Heart left ventricle (tissue), 16 donors: ENCODE measurements at regions of chr13 and their contacts with region 1.

Region 1: GRCh38 chr13:29707876-29708543 is 112.5 kb upstream of the SLC7A1 start:
- DNase-seq: peak in 3 of 5 donors; percentile 19 to 62 (median 33)
- ATAC-seq: peak; percentile 67 to 73 (median 71)
- H3K4me3 ChIP-seq: no peak overlapping the region
- H3K27ac ChIP-seq: no peak overlapping the region
- H3K4me1 ChIP-seq: peaks cover 0 to 15% (median 9%) of the 10 kb centered on the region in 12 donors
- H3K27me3 ChIP-seq: peaks cover 0 to 3% (median 0%) of the 10 kb centered on the region in 9 donors
- CTCF ChIP-seq: peak; percentile 21 to 64 (median 50)
- POLR2A ChIP-seq: no peak

Region 2: GRCh38 chr13:29619995-29620394 is 88.0 kb before region 1 on chr13:
- intact Hi-C with region 1: loop called in 1 of 10 experiments (anchors 10 kb)
- DNase-seq: no peak
- ATAC-seq: no peak
- H3K4me3 ChIP-seq: no peak overlapping the region
- H3K27ac ChIP-seq: no peak overlapping the region
- H3K4me1 ChIP-seq: no peaks in the 10 kb centered on the region
- H3K27me3 ChIP-seq: no peaks in the 10 kb centered on the region
- CTCF ChIP-seq: no peak
- POLR2A ChIP-seq: no peak

Region 3: DNA sequence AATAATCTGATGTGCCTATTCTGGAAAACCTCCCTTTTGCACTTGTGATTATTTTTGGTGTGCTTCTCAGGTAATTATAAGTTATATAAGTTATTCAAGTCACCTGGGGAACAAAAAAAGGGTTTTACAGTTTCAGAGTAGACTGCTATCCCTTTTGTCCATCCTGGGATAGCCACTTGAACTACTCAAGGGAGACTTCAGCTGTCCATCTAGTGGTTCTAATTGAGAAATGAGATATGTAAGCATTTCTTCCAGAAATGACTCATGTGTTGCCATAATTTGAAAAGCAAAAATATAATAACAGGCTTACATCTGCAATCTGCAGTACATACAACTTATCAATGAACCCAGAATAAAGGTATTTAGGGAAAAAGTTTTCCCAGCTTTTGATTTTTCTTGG is 122.0 kb after region 1 on chr13:
- intact Hi-C with region 1: no loop called
- DNase-seq: no peak
- ATAC-seq: no peak
- H3K4me3 ChIP-seq: no peak overlapping the region
- H3K27ac ChIP-seq: no peak overlapping the region
- H3K4me1 ChIP-seq: peaks cover 0 to 21% (median 9%) of the 10 kb centered on the region in 12 donors
- H3K27me3 ChIP-seq: no peaks in the 10 kb centered on the region
- CTCF ChIP-seq: no peak
- POLR2A ChIP-seq: no peak

Region 4: DNA sequence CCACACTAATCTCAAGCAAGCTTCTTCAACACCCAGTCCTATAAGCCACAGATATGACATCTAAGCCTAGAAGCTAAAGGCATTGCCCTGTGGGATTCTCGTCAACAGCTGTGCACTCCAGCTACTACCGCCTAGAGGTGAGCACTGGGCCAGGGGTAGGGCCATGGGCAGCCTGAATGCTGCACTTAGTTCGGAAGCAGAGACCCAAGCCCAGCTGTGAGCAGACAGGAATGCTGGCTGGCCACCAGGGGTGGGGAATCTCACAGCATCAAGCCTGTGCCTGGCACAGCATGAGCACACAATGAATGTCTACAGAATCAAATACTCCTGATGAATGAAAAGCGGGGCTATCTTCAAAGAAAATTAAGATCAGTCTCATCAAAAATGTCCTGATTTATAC is 309.9 kb after region 1 on chr13:
- intact Hi-C with region 1: no loop called
- DNase-seq: no peak
- ATAC-seq: no peak
- H3K4me3 ChIP-seq: no peak overlapping the region
- H3K27ac ChIP-seq: no peak overlapping the region
- H3K4me1 ChIP-seq: peaks cover 0 to 5% (median 0%) of the 10 kb centered on the region in 12 donors
- H3K27me3 ChIP-seq: peaks cover 0 to 3% (median 0%) of the 10 kb centered on the region in 9 donors
- CTCF ChIP-seq: no peak
- POLR2A ChIP-seq: no peak